ENCODE measurements at regions of chr6 and their contacts with region 1.

Region 1: DNA sequence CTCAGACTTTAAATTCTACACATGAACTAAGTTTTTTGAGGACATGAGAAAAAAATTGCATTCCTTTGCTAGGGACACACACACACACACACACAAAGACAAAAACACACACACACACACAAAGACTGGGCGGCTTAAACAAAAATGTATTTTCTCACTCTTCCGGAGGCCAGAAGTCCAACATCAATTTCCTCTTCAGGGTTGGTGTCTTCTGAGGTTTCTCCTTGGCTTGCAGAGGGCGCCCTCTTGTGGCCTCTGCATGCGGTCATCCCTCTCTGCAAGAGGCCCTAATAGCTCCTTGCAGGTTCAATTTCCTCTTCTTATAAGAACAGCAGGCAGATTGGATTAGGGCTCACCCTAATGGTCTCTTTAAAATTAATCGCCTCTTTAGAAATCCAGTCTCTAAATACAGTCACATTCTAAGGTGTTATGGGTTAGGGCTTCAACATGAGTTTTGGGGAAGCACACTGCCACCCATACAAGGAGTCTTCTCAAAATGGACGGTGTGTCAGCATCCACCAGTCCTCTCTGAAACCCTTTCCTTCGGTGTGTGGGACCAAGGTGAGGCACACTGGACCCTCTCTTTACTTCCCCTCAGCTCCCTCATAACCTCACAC is 61.4 kb downstream of the GPR6 start:
- DNase-seq: peak; percentile 91
- ATAC-seq: peak; percentile 92
- H3K4me3 Mint-ChIP-seq: peak overlapping the region; percentile 81
- H3K27ac Mint-ChIP-seq: peak overlapping the region; percentile 95
- H3K4me1 Mint-ChIP-seq: peaks cover 28% of the 10 kb centered on the region
- H3K27me3 Mint-ChIP-seq: no peaks in the 10 kb centered on the region

Region 2: DNA sequence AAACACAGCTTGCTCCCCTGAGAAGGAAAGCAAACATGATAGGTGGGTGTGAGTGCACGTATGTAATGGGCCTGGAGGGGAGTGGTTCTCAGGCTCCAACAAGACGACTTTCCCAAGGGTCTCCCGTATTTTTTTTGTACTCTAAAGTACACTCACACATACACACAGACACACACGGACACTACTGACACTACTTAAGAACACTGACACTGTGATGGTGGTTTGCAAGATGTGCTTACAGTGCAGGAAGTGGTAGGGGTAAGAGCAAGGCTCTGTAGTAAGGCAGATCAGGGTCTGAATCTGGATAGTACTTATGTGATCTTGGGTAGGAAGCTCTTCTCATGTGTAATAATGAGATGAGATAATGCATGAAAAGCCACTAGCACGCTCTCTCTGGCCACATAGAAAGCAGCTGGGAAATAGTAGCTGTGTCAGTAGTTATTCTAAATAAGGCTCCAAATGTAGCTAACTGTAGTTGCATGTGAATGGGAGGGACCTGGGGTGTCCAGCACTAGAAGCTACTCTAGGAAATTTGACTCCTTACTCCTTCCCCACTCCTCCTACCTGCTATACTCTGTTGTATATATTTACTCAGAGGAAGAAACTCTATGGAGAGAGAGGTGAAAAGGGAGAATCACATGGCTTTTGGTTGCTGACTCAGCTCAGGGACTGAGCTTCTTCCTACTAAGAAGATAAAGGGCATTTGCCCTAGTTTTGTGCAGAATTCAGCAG is 548.1 kb before region 1 on chr6:
- CTCF ChIA-PET with region 1: interaction called, 10 read pairs
- POLR2A ChIA-PET with region 1: no interaction called
- DNase-seq: peak; percentile 66
- ATAC-seq: peak; percentile 97
- H3K4me3 Mint-ChIP-seq: peak overlapping the region; percentile 56
- H3K27ac Mint-ChIP-seq: peak overlapping the region; percentile 94
- H3K4me1 Mint-ChIP-seq: peaks cover 32% of the 10 kb centered on the region
- H3K27me3 Mint-ChIP-seq: peaks cover 9% of the 10 kb centered on the region

Region 3: GRCh38 chr6:109595998-109596397 is 443.5 kb before region 1 on chr6:
- CTCF ChIA-PET with region 1: interaction called, 10 read pairs
- POLR2A ChIA-PET with region 1: no interaction called
- DNase-seq: peak; percentile 28
- ATAC-seq: peak; percentile 36
- H3K4me3 Mint-ChIP-seq: no peak overlapping the region
- H3K27ac Mint-ChIP-seq: no peak overlapping the region
- H3K4me1 Mint-ChIP-seq: no peaks in the 10 kb centered on the region
- H3K27me3 Mint-ChIP-seq: no peaks in the 10 kb centered on the region

Region 4: DNA sequence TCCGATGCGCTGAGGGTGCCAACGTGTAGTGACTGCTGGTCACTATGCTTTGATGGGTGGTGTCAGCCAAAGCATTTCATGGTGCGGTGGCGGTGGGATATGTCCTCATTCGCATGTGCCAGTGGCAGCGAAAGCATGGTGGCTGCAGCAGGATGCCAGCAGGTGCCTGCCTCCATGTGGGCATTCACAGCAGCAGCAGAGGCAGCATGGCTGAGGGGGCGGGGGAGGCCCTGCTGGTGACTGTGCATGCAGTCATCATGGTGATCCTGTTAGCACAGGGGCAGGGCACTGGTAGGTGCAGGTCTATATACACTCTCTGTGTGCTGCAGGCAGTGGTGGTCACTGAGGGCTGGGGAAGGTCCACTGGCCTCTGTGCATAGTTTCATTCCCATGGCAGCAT is 326.4 kb before region 1 on chr6:
- CTCF ChIA-PET with region 1: interaction called, 42 read pairs
- POLR2A ChIA-PET with region 1: no interaction called
- DNase-seq: no peak
- ATAC-seq: no peak
- H3K4me3 Mint-ChIP-seq: no peak overlapping the region
- H3K27ac Mint-ChIP-seq: no peak overlapping the region
- H3K4me1 Mint-ChIP-seq: no peaks in the 10 kb centered on the region
- H3K27me3 Mint-ChIP-seq: no peaks in the 10 kb centered on the region

Region 5: GRCh38 chr6:110020888-110021287 is 18.6 kb before region 1 on chr6:
- CTCF ChIA-PET with region 1: interaction called, 30 read pairs
- POLR2A ChIA-PET with region 1: no interaction called
- DNase-seq: peak; percentile 34
- ATAC-seq: peak; percentile 78
- H3K4me3 Mint-ChIP-seq: no peak overlapping the region
- H3K27ac Mint-ChIP-seq: peak overlapping the region; percentile 51
- H3K4me1 Mint-ChIP-seq: peaks cover 17% of the 10 kb centered on the region
- H3K27me3 Mint-ChIP-seq: no peaks in the 10 kb centered on the region

Region 6: GRCh38 chr6:110063594-110064263 is 24.3 kb after region 1 on chr6:
- CTCF ChIA-PET with region 1: interaction called, 21 read pairs
- POLR2A ChIA-PET with region 1: no interaction called
- DNase-seq: peak; percentile 45
- ATAC-seq: peak; percentile 82
- H3K4me3 Mint-ChIP-seq: no peak overlapping the region
- H3K27ac Mint-ChIP-seq: no peak overlapping the region
- H3K4me1 Mint-ChIP-seq: peaks cover 14% of the 10 kb centered on the region
- H3K27me3 Mint-ChIP-seq: peaks cover 48% of the 10 kb centered on the region

Region 7: GRCh38 chr6:110190726-110191125 is 151.3 kb after region 1 on chr6:
- CTCF ChIA-PET with region 1: no interaction called
- POLR2A ChIA-PET with region 1: no interaction called
- DNase-seq: no peak
- ATAC-seq: no peak
- H3K4me3 Mint-ChIP-seq: no peak overlapping the region
- H3K27ac Mint-ChIP-seq: no peak overlapping the region
- H3K4me1 Mint-ChIP-seq: peaks cover 15% of the 10 kb centered on the region
- H3K27me3 Mint-ChIP-seq: no peaks in the 10 kb centered on the region